Calu3 (cell line): ENCODE measurements at regions of chr3 and their contacts with region 1.

Region 1: GRCh38 chr3:196563721-196564225 is 4.6 kb downstream of the WDR53 start:
- DNase-seq: no peak
- H3K4me3 Mint-ChIP-seq: no peak overlapping the region
- H3K27ac Mint-ChIP-seq: no peak overlapping the region
- H3K4me1 Mint-ChIP-seq: peaks cover 9% of the 10 kb centered on the region
- H3K27me3 Mint-ChIP-seq: no peaks in the 10 kb centered on the region
- CTCF ChIP-seq: no peak

Region 2: GRCh38 chr3:195732940-195733339 is 830.8 kb before region 1 on chr3:
- CTCF ChIA-PET with region 1: interaction called, 12 read pairs
- intact Hi-C with region 1: no loop called
- DNase-seq: no peak
- H3K4me3 Mint-ChIP-seq: no peak overlapping the region
- H3K27ac Mint-ChIP-seq: no peak overlapping the region
- H3K4me1 Mint-ChIP-seq: no peaks in the 10 kb centered on the region
- H3K27me3 Mint-ChIP-seq: no peaks in the 10 kb centered on the region
- CTCF ChIP-seq: no peak